ENCODE measurements at regions of chr6 and their contacts with region 1.

Region 1: DNA sequence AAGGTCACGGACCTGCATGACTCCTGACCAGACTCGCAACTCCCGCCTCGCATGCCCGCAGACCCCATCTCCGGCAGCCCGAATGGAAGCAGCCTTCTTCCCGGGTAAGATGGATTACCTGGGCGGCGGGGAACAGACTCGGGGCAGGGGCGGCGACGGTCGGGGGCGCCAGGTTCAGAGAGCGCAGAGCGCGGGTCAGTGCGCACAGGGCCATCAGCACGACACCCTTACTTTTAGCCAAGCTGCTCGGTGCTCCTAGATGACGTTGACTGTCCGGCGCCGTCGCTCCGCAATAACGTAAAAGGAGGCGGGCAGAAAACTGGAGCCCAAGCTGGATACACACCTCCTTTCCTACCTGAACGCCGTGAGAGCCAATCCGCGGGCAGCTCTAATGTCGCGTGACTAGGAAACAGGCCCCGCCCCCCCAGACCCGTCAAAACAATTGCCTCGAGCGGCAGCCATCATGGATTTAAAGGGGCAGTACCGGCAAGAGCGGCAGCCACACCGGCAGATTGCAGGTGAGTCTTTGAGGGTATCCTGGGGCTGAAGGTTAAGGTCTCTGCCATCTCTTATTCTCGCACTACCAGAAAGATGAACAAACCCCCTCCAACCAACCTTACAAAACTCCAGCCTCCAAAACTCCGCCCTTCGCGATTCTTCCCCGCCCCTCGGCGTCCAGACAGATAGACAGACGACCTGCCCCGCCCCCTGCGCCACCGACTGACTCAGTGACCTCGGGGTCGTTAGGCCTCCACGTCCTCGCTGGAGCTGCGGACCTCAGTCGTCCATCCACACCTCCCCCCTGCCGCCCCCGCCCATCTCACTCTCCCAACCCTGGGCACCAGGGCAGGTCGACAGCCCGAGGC is at the starts of genes KLC4 and MRPL2:
- DNase-seq: peak; percentile 98 to 100 (median 100)

Region 2: GRCh38 chr6:42563697-42564505 is 495.5 kb before region 1 on chr6 and contains the start of gene UBR2:
- intact Hi-C with region 1: loop called (anchors 10 kb)
- DNase-seq: peak; percentile 91 to 99 (median 96)

Region 3: DNA sequence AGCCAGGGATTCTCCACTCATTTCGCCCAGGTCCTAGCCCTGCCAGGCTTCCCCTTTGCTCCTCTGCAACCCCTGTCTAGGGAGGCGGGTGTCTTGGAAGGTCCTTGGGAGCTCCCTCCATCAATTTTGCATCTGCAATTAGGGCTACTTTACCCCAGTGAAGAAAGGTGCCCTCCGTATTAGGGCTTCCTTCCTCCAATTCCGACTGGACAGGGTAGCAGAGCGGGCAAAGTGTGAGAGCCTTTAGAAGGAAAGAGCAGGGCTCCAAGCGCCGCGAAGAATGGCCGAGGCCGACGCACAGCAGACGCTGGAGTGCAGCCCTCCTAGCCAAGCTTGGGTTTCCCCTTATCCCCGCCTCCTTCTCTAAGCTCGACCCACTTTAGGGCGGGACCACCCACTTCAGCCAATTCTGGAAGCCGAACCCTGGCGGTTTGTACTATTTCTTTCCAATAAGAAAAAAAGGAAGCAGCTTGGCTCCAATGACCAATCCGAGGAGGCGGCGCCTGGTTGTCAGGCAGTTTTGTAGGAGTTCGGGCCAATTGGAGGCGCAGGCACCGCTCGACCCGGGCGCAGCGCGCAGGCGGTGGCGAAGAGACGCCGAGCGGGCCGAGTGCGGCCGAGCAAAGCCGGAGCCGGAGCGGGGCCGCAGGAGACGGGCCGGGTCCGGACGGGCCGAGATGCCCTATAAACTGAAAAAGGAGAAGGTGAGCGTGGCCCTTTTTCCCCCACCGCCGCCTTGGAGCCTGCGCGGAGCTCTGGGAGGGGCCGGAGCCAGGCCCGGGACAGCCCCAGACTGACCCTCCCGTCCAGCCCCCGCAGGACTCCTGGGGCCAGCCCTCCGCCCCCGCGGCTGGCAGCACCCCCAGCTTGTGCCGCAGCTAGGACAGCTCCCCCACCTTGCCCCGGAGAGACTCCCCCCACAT is 75.1 kb before region 1 on chr6 and contains the start of gene PPP2R5D:
- intact Hi-C with region 1: loop called (anchors 10 kb)
- DNase-seq: peak; percentile 95 to 100 (median 97)

Region 4: GRCh38 chr6:43421831-43422230 is 362.4 kb after region 1 on chr6:
- intact Hi-C with region 1: no loop called
- DNase-seq: no peak